ENCODE measurements at regions of chr3 and their contacts with region 1.

Region 1: DNA sequence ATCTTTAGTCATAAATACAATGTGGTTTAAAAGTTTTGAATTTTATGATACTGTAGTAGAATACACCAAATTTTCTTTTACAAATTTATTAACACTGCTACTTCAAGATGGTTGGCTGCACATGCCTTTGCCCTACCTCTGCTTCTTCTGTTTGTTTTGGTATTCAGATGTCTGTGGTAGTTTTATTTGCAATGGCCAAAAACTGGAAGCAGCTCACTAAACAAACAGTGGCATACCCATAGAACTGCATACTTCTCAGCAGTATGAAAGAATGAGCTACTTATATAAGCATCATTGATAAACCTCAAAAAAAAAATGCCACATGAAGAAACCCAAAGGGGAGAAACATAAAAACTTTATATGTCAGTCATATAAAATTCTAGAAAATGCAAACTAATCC is 19.5 kb downstream of the ARIH2 start:
- DNase-seq: no peak
- H3K4me3 ChIP-seq: no peak overlapping the region
- H3K27ac ChIP-seq: no peak overlapping the region
- H3K4me1 ChIP-seq: no peaks in the 10 kb centered on the region
- H3K27me3 ChIP-seq: no peaks in the 10 kb centered on the region
- CTCF ChIP-seq: no peak

Region 2: DNA sequence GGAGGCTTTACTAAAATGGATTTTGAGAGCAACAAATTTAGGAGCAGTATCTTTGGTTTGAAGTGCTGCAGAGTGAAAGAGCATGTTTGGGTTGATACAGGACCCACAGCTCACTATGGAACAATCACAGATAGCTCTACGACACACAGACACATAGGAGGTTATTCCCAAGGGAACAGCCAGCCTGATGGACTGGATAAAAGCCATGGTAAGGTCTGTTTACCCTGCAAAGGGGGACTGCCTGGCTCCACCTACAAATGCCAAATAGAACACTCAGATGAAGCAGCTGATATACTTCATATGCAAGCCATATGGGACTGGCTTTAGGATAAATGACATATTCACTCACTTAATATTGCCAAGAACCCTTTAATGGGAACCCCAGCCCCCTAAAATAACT is 825.3 kb before region 1 on chr3:
- CTCF ChIA-PET with region 1: no interaction called
- POLR2A ChIA-PET with region 1: no interaction called
- intact Hi-C with region 1: no loop called
- DNase-seq: no peak
- H3K4me3 ChIP-seq: no peak overlapping the region
- H3K27ac ChIP-seq: no peak overlapping the region
- H3K4me1 ChIP-seq: no peaks in the 10 kb centered on the region
- H3K27me3 ChIP-seq: no peaks in the 10 kb centered on the region
- CTCF ChIP-seq: no peak

Region 3: DNA sequence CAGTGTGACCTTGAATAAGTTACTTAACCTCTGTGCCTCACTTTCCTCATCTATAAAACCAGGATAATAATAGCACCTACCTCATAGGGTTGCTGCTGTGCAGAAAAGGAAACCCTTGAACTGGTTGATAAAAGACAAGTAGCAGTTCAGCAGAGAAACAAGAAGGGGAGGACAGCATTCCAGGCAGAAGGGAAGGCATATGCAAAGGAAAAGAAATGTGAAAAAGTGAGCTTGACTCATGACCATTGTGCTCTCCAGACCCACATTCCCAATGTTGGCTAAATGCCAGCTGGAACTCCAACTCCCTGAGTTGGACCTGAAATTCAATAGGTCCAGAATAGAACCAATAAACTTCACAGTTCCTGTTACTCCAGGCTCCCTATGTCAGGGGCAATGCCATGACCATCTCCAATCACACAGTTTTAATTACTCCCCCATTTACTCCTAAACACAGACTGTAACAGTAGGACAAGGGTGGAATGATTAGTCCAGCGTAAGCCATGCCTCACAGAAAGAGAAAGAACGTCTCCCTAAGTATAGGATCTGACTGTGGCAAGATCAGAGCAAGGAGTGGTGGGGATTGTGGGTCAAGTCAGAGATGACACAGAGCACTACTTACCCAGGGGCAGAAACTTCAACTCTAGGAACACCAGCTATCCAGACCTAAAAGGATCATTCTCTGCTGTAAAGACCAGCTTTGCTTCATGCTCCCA is 117.4 kb before region 1 on chr3:
- CTCF ChIA-PET with region 1: no interaction called
- POLR2A ChIA-PET with region 1: no interaction called
- intact Hi-C with region 1: no loop called
- DNase-seq: no peak
- H3K4me3 ChIP-seq: no peak overlapping the region
- H3K27ac ChIP-seq: no peak overlapping the region
- H3K4me1 ChIP-seq: no peaks in the 10 kb centered on the region
- H3K27me3 ChIP-seq: no peaks in the 10 kb centered on the region
- CTCF ChIP-seq: no peak

Region 4: DNA sequence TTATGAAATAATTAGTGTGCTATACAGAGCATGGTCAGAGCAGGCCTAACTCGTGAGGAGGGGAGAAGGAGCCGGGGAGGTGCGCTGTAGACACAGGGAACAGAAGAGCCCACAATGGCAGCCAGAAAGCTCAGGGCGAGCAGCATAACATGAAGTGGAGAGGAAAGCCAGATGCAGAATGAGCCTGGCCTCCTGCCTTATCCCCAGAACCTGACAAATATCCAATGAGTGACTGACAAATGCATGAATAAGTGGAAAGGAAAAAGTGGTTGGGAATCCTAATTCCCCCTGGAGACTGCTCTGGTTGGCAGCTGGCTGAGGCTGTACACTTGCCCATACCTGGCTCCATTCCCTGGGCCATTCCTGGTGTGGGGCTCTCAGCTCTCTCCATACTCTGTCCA is 974.7 kb after region 1 on chr3:
- CTCF ChIA-PET with region 1: no interaction called
- POLR2A ChIA-PET with region 1: interaction called, 10 read pairs
- intact Hi-C with region 1: no loop called
- DNase-seq: no peak
- H3K4me3 ChIP-seq: no peak overlapping the region
- H3K27ac ChIP-seq: no peak overlapping the region
- H3K4me1 ChIP-seq: no peaks in the 10 kb centered on the region
- H3K27me3 ChIP-seq: no peaks in the 10 kb centered on the region
- CTCF ChIP-seq: no peak